GM13977 (cell line): ENCODE measurements at regions of chr17 and their contacts with region 1.

Region 1: GRCh38 chr17:5706577-5707216 is 122.4 kb upstream of the NLRP1 start:
- DNase-seq: peak; percentile 65
- CTCF ChIP-seq: peak; percentile 81

Region 2: GRCh38 chr17:6443692-6444569 is 737.2 kb after region 1 on chr17 and contains the start of gene PIMREG:
- in situ Hi-C with region 1: loop called (anchors 25 kb)
- DNase-seq: peak; percentile 97
- CTCF ChIP-seq: no peak